H1 (cell line): ENCODE measurements at regions of chr9 and their contacts with region 1.

Region 1: DNA sequence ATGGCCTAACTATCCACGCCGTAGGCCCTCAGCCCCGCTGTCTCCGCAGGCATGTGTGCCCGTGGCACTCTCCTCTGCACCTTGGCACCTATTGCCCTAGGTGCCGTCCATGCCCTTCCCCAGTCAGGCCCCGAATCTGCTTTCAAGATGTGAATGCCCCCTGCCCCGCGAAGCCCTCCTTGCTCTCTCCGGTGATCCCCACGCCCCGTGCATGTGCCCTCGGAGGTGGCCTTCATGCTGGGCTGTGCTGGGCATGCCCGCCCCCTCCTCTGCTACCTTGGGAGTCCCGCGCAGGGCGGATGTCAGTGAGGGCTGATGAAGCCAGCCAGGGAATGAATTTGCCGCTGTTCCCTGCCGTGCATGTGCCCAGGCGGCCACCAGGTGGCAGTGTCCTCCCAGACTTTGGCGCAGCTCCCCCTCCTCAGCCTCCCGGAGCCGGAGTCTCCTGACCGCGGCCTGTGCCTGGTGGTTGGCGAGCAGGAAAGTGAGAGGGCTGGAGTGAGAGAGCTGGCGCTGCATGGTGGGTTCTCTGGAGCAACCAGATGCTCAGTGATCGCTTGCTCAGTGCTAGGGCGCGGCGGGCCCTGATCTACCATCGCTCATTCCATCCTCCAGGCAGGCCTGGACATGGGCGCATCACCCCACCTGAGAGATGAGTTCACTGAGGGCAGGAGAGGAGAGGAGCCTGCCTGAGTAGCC is 112.9 kb upstream of the LMX1B start:
- DNase-seq: peak; percentile 82 to 94
- H3K4me3 ChIP-seq: peak overlapping the region in 3 of 4 experiments; percentile 44 to 72 (median 53); a peak in 7 of 8 replicates
- H3K27ac ChIP-seq: no peak overlapping the region
- H3K4me1 ChIP-seq: peaks cover 0 to 11% (median 8%) of the 10 kb centered on the region in 4 experiments; a peak in 6 of 7 replicates
- H3K27me3 ChIP-seq: peaks cover 0 to 10% (median 3%) of the 10 kb centered on the region in 4 experiments; a peak in 5 of 7 replicates
- CTCF ChIP-seq: peak in 2 of 3 experiments; percentile 98 to 99; a peak in 3 of 4 replicates
- EP300 ChIP-seq: peak in 1 of 2 experiments; percentile 54; a peak in 1 of 3 replicates
- POLR2A ChIP-seq: no peak
- RAD21 ChIP-seq: peak; percentile 98

Region 2: DNA sequence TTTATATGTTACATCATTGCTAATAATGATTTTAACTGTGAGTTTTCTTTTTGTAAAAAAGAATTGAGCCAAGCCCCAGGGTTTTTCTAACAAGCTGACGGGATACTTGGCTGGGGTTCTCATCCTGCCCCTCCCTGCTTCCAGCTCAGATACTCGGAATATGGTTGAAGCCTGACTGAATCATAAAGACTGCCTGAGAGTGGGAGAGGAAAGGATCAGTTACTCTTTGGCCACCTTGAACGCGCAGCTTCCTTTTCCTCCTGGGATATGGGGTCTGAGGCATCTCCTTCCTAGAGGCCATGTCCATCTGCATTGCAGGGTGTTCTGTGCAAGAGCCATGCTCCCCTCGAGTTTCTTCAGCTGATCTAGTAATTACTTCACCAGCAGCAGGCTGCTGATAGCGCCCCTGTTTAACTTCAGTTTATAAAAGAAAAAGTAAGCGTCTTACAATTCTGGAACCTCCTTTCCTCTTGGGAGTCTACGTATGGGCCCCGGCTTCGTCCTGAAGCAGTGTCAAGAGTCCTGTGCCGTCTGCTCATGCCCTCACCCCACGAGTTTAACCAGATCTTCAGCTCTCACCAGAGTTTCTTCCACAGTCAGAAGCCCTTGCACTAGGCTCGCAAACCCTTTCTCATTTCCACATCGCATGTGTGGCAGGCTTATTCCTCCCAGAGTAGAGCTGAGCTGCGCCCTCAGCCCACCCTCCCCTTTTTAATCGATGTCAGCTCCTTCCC is 44.2 kb before region 1 on chr9:
- CTCF ChIA-PET with region 1: no interaction called
- POLR2A ChIA-PET with region 1: no interaction called
- DNase-seq: no peak
- H3K4me3 ChIP-seq: no peak overlapping the region
- H3K27ac ChIP-seq: no peak overlapping the region
- H3K4me1 ChIP-seq: peaks cover 0 to 4% (median 0%) of the 10 kb centered on the region in 4 experiments; a peak in 2 of 7 replicates
- H3K27me3 ChIP-seq: no peaks in the 10 kb centered on the region
- CTCF ChIP-seq: no peak
- EP300 ChIP-seq: no peak
- POLR2A ChIP-seq: no peak
- RAD21 ChIP-seq: no peak

Region 3: DNA sequence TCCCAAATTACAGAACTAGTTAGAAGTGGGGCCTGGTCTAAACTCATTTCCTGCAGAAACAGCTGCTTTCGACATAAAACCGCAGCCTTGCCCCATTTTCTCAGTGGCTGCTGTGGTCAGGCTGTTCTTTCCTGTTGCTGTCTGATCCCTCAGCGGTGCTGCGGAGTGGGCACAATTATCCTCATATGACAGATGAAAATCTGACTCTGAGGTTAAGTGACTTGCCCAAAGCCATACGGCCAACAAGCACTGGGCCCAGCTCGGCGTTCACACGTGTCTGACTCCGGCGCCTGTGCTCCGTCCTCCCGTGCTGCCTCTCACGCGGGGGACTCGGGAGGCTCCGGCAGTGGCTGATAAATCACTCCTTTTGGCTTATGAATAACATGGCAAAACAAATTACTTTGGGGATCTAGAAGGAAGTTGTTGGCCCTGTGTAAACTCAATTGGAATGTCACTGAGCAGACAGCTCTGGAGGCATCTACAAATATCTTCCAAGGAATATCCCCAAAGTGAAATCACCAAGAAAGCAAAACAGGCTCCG is 29.7 kb before region 1 on chr9:
- CTCF ChIA-PET with region 1: interaction called, 14 read pairs
- POLR2A ChIA-PET with region 1: no interaction called
- DNase-seq: no peak
- H3K4me3 ChIP-seq: no peak overlapping the region
- H3K27ac ChIP-seq: no peak overlapping the region
- H3K4me1 ChIP-seq: peaks cover 0 to 13% (median 3%) of the 10 kb centered on the region in 4 experiments; a peak in 3 of 7 replicates
- H3K27me3 ChIP-seq: no peaks in the 10 kb centered on the region
- CTCF ChIP-seq: no peak
- EP300 ChIP-seq: no peak
- POLR2A ChIP-seq: no peak
- RAD21 ChIP-seq: no peak

Region 4: DNA sequence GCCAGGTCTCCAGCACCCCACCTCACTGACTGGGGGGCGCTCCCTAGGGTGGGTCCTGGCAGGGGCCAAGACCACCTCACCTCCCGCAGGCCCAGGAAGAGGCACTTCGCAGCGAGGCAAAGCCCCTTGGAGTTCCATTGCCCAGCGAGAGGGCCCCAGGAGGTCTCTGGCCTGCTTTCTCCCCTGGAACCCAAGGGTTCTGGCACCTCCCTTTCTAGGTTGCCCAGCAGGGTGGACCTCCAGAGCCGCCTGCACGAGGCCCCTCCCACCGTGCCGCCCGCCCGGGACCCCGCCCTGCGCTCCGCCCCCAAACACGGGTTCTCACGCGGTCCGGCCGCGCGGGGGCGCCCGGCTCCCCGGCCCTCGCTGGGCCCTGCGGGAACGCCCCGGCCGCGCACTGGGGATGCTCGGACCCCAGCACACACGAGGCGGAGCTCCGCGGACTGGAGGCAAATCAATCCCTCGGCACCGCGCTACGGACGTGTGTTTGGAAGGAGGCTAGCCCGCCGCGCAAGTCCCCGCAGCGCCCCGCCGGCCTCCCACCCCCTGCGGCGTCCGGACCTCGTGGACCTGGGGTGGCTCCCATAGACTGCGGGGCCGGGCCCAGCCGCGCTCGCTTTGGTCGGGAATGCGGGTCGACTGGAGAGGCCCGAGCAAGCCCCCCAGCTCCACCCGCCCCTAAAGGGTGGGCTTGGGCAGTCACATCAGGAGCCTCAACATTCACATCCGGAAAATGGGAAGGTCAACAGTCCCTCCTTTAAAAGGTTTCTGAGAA is 13.4 kb after region 1 on chr9:
- CTCF ChIA-PET with region 1: interaction called, 128 read pairs
- POLR2A ChIA-PET with region 1: interaction called, 4 read pairs
- DNase-seq: peak in 1 of 2 experiments; percentile 96
- H3K4me3 ChIP-seq: peak overlapping the region in 1 of 4 experiments; percentile 50; a peak in 3 of 8 replicates
- H3K27ac ChIP-seq: no peak overlapping the region
- H3K4me1 ChIP-seq: peaks cover 0 to 12% (median 8%) of the 10 kb centered on the region in 4 experiments; a peak in 6 of 7 replicates
- H3K27me3 ChIP-seq: peaks cover 0 to 12% (median 7%) of the 10 kb centered on the region in 4 experiments; a peak in 4 of 7 replicates
- CTCF ChIP-seq: peak; percentile 55 to 79 (median 62)
- EP300 ChIP-seq: peak in 1 of 2 experiments; percentile 22; a peak in 1 of 3 replicates
- POLR2A ChIP-seq: no peak
- RAD21 ChIP-seq: peak; percentile 6 to 63; a peak in 2 of 4 replicates

Region 5: GRCh38 chr9:126558051-126558665 is 57.3 kb after region 1 on chr9:
- CTCF ChIA-PET with region 1: interaction called, 276 read pairs
- POLR2A ChIA-PET with region 1: no interaction called
- DNase-seq: peak; percentile 29 to 93
- H3K4me3 ChIP-seq: no peak overlapping the region
- H3K27ac ChIP-seq: no peak overlapping the region
- H3K4me1 ChIP-seq: peaks cover 0 to 2% (median 0%) of the 10 kb centered on the region in 4 experiments; a peak in 2 of 7 replicates
- H3K27me3 ChIP-seq: no peaks in the 10 kb centered on the region; a peak in 1 of 7 replicates
- CTCF ChIP-seq: peak; percentile 98 to 99 (median 98)
- EP300 ChIP-seq: no peak
- POLR2A ChIP-seq: no peak
- RAD21 ChIP-seq: peak; percentile 96 to 98

Region 6: GRCh38 chr9:126781186-126782052 is 280.6 kb after region 1 on chr9:
- CTCF ChIA-PET with region 1: interaction called, 20 read pairs
- POLR2A ChIA-PET with region 1: no interaction called
- DNase-seq: peak; percentile 68 to 100
- H3K4me3 ChIP-seq: no peak overlapping the region
- H3K27ac ChIP-seq: no peak overlapping the region
- H3K4me1 ChIP-seq: peaks cover 0 to 2% (median under 1%) of the 10 kb centered on the region in 4 experiments; a peak in 1 of 7 replicates
- H3K27me3 ChIP-seq: peaks cover 0 to 5% (median 2%) of the 10 kb centered on the region in 4 experiments; a peak in 4 of 7 replicates
- CTCF ChIP-seq: peak; percentile 90 to 97 (median 91)
- EP300 ChIP-seq: no peak
- POLR2A ChIP-seq: no peak
- RAD21 ChIP-seq: peak; percentile 97 to 98